Posterior vena cava (tissue), 2 donors: ENCODE measurements at regions of chr20 and their contacts with region 1.

Region 1: DNA sequence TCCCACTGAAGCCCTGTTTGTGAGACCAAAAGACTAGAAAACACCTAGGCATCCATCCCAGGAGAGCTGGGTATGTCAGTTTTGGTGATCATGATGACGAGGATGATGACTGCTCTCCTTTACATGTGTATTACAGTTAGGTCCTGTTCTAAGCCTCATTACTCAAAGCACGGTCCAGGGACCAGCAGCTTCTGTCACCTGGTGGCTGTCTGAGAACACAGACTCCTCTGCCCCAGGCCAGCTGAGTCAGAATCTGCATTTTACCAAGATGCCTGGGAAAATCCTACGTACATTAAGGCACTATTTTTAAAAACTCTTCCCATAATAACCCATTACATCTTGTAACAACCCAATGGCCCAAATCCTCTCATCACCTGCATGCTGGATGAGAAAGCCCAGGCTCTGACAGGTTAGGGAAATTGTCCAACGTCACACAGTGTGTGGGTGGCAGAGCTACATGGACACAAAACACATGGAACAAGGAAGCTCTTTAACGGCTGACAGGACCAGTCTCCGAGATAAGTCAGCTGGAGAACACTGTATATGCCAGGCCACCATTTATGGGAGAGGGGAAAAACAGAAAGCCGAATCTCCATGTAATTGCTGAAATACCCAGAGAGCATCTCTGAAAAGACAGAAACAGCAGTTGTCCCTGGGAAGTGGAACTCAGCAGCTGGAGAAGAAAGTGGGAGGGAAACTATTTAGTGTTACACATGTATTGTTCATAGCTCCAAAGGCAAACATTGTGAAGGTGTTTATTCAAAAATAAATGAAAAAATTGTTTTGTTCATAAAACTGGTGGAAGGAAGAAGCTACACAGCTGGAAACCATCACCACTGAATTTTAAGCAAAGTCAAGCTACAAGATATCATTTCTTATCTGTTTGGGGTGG is 65.3 kb downstream of the BMP7 start:
- DNase-seq: no peak

Region 2: GRCh38 chr20:57174568-57175136 is 26.5 kb before region 1 on chr20:
- intact Hi-C with region 1: loop called in 1 of 2 experiments (anchors 1 kb)
- DNase-seq: no peak